ENCODE measurements at regions of chr12 and their contacts with region 1.

Region 1: GRCh38 chr12:116910645-116911451 is at the start of gene FBXW8:
- DNase-seq: peak; percentile 73 to 79
- H3K4me3 ChIP-seq: peak within 1 kb of the TSS; percentile 75 to 88 (median 81)
- H3K27ac ChIP-seq: peak within 1 kb of the TSS; percentile 86 to 94 (median 93)
- H3K4me1 ChIP-seq: peaks cover 0 to 17% of the 10 kb centered on the region in 2 donors
- H3K27me3 ChIP-seq: no peaks in the 10 kb centered on the region
- CTCF ChIP-seq: no peak
- POLR2A ChIP-seq: peak; percentile 27 to 69
- total RNA-seq, gene FBXW8: 29.3 to 45.5 (median 32.9) TPM

Region 2: DNA sequence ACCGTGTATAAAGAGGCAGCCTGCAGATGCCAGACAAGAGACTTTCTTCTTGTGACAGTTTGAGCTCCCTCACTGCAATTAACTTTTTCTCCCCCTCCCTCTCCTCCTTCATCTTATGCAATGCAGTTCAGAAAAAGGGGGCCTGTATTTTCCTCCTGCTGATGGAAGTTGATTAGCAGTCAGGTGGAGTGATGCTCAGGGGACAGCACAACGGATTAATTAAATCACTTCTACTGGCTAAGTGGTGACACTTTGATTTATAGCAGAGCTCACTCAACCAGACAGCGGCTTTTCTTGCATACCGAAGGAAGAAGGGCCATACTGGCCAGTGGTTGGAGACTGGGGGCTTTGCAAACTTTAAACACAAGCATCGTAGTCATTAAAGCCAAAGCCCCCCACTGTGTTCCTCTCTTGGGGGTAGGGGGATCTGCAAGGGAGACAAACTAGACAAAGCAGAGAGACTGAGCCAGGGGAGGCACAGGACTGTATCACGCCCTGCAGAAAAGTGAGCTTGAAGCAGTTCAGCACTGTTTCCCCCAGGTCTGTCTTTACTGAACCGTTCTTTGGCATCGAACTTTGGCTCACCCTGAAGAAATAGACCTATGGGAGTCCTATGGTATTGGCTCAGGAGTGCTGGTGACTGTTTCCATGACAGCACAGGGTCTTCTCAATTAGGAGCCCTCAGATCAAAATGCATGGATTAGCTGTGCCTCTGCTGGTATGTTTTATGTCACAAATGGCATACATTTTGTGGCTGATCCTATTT is 220.7 kb before region 1 on chr12:
- intact Hi-C with region 1: no loop called
- DNase-seq: no peak
- H3K4me3 ChIP-seq: no peak overlapping the region
- H3K27ac ChIP-seq: no peak overlapping the region
- H3K4me1 ChIP-seq: peaks cover 8 to 21% of the 10 kb centered on the region in 2 donors
- H3K27me3 ChIP-seq: no peaks in the 10 kb centered on the region
- CTCF ChIP-seq: no peak
- POLR2A ChIP-seq: no peak

Region 3: DNA sequence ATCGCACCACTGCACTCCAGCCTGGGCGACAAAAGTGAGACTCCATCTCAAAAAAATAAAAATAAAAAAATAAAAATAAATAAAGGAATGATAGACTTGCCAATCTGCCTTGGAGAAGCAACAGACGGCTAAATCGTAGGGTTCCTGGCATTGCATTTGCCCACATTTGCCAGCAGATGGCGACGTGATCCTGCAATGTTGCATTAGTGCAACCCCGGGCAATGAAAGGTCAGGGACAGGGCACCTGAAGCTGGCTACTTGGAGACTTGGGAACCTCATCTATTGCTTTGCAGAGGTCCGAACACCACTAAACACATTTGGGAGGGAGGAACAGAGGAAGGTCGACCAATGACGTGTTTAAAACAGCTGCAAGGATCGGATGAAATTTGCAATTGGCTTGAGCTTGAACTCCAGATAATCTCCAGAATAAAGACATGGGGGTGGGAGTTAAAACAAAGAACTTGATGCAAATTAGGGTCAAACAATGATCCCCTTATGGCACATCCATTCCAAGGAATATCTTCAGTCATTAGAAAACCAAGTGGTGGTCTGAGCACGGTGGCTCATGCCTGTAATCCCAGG is 207.5 kb before region 1 on chr12:
- intact Hi-C with region 1: loop called (anchors 10 kb)
- DNase-seq: peak; percentile 71 to 78
- H3K4me3 ChIP-seq: no peak overlapping the region
- H3K27ac ChIP-seq: no peak overlapping the region
- H3K4me1 ChIP-seq: peaks cover 15 to 24% of the 10 kb centered on the region in 2 donors
- H3K27me3 ChIP-seq: no peaks in the 10 kb centered on the region
- CTCF ChIP-seq: peak; percentile 88 to 98 (median 91)
- POLR2A ChIP-seq: no peak

Measured in thyroid gland (tissue), 4 donors.